IMR-90 (cell line): ENCODE measurements at regions of chr6 and their contacts with region 1.

Region 1: GRCh38 chr6:30686908-30687658 is 638 bp upstream of the PPP1R18 start:
- DNase-seq: peak; percentile 96
- ATAC-seq: peak; percentile 63
- H3K4me3 ChIP-seq: peak overlapping the region; percentile 97
- H3K27ac ChIP-seq: peak overlapping the region; percentile 99
- H3K4me1 ChIP-seq: peaks cover 19% of the 10 kb centered on the region
- H3K27me3 ChIP-seq: no peaks in the 10 kb centered on the region
- CTCF ChIP-seq: no peak
- POLR2A ChIP-seq: 0 out of 2 replicates have a peak, but pooled peaks have one; percentile 34
- RAD21 ChIP-seq: no peak

Region 2: DNA sequence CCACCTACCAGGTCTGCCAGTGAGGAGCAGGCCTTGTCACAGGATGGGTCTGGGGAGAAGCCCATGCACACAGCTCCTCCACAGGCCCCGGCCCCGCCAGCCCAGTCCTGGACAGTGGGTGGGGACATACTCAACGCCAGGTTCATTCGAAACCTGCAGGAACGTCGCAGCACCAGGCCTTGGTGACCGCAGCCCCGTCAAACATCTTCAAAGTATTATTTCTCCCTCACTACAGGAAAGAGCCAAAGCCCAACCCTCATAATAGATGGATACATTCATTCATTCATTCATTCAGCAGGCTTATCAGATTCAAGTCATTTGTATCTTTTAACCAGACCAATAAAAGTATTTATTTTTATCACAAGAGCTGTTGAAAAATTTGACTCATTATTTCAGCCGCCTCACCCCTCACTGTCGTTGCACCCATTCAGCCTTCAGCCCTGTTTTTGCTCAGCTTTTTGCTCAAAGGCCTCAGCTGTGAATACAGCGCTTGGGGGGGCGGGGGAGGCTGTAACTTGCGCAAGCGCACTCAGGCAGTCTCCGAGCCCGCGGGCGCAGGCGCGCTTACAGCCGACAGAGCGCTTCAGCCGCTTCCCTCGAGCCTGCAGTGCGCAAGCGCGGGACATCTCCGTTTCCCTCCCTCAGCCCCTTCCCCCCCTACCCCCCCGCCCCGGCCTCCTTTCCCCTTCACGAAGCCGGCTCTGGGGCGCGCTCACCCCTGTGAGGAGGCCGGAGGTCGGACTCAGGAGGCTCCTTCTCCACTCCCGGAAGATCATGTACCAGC is 40.4 kb before region 1 on chr6 and contains the start of gene C6orf136:
- CTCF ChIA-PET with region 1: no interaction called
- POLR2A ChIA-PET with region 1: interaction called, 10 read pairs
- dilution Hi-C with region 1: no loop called
- in situ Hi-C with region 1: no loop called
- intact Hi-C with region 1: no loop called
- DNase-seq: peak; percentile 91
- ATAC-seq: peak; percentile 90
- H3K4me3 ChIP-seq: peak within 1 kb of the TSS; percentile 93
- H3K27ac ChIP-seq: peak within 1 kb of the TSS; percentile 86
- H3K4me1 ChIP-seq: no peaks in the 10 kb centered on the region
- H3K27me3 ChIP-seq: no peaks in the 10 kb centered on the region
- CTCF ChIP-seq: no peak
- POLR2A ChIP-seq: no peak
- RAD21 ChIP-seq: no peak
- total RNA-seq, gene C6orf136: 1.1 and 1.4 TPM in 2 replicates

Region 3: DNA sequence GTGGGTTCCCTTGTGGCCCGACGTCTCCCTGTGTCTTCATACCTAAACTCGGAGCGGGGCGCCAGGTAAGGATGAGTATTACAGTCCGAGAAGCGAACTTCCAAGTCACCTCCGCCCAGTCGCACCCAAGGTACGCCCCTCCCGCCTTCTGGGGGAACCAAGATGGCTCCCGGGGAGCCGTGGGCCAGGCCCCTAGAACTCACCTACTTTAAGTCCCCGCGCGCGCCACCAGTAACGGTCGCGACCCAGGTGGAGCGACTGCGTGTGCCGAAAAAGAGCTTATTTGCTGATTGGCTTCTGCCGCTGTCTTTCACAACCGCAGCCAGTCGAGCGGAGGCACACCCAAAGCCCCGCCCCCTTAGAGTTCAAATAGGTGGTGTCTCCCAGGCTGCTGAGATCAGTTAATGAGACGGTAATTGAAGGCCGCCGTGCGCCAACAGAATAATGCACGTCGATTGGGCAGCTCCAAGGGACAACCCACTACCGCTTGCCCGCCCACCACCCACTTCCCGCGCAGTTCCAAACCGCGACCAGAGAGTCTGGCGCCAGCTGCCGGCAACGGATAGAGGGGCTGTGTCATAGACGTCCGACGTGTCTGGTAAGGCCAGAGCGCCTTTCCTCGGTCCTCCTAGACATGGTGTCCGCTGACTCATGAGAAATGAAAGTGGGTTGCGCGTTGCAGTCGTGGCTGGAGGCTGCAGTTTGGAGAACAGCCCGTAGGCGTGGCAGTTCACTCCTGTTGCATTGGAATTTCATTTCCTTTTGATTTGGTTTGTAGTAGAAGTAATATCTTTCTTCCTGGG is 30.2 kb after region 1 on chr6 and contains the start of gene MDC1:
- CTCF ChIA-PET with region 1: no interaction called
- POLR2A ChIA-PET with region 1: interaction called, 7 read pairs
- dilution Hi-C with region 1: no loop called
- in situ Hi-C with region 1: loop called (anchors 5 kb)
- intact Hi-C with region 1: loop called (anchors 1 kb)
- DNase-seq: peak; percentile 100
- ATAC-seq: peak; percentile 77
- H3K4me3 ChIP-seq: peak within 1 kb of the TSS; percentile 61
- H3K27ac ChIP-seq: peak within 1 kb of the TSS; percentile 78
- H3K4me1 ChIP-seq: peaks cover 4% of the 10 kb centered on the region; the same call in 1 of the 2 replicates
- H3K27me3 ChIP-seq: no peaks in the 10 kb centered on the region
- CTCF ChIP-seq: peak; percentile 29; the same call in 1 of the 2 replicates
- POLR2A ChIP-seq: peak; percentile 64
- RAD21 ChIP-seq: no peak
- total RNA-seq, gene MDC1: 3.6 and 4.5 TPM in 2 replicates

Region 4: DNA sequence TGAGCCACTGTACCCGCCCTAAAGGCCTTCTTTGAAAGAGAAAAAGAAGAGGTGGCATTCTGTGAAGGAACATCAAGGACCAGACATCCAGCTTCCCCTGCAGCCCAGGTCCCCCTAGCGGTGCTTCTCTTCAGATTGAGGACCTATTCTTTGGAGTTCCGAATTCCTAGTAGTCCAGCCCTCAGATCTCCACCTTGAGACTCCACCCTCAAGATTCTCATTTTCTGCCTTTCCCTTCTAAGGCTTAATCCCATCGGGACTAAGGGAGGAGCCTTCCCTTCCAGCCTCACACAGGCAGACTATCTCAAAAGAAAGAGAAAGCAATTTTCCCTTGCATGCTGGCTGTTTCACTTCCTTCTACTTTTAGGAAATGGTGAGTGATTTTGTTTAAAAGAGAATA is 355.7 kb after region 1 on chr6:
- CTCF ChIA-PET with region 1: no interaction called
- POLR2A ChIA-PET with region 1: no interaction called
- dilution Hi-C with region 1: no loop called
- in situ Hi-C with region 1: no loop called
- intact Hi-C with region 1: no loop called
- DNase-seq: peak; percentile 50
- ATAC-seq: peak; percentile 60
- H3K4me3 ChIP-seq: no peak overlapping the region
- H3K27ac ChIP-seq: no peak overlapping the region
- H3K4me1 ChIP-seq: peaks cover 2% of the 10 kb centered on the region; the same call in 1 of the 2 replicates
- H3K27me3 ChIP-seq: peaks cover 32% of the 10 kb centered on the region
- CTCF ChIP-seq: peak; percentile 59
- POLR2A ChIP-seq: no peak
- RAD21 ChIP-seq: peak; percentile 61